Heart right ventricle (tissue), 16 donors: ENCODE measurements at regions of chr19 and their contacts with region 1.

Region 1: GRCh38 chr19:37466798-37467607 is at the start of gene ZNF569:
- DNase-seq: peak; percentile 85 to 93
- ATAC-seq: peak; percentile 84 to 90 (median 86)
- H3K4me3 ChIP-seq: peak within 1 kb of the TSS; percentile 71 to 85 (median 79)
- H3K27ac ChIP-seq: peak within 1 kb of the TSS; percentile 85 to 99 (median 94)
- H3K4me1 ChIP-seq: peaks cover 2 to 34% (median 27%) of the 10 kb centered on the region in 9 donors
- H3K27me3 ChIP-seq: no peaks in the 10 kb centered on the region
- CTCF ChIP-seq: no peak
- total RNA-seq, gene ZNF569: 4.5 to 8.0 (median 6.2) TPM

Region 2: DNA sequence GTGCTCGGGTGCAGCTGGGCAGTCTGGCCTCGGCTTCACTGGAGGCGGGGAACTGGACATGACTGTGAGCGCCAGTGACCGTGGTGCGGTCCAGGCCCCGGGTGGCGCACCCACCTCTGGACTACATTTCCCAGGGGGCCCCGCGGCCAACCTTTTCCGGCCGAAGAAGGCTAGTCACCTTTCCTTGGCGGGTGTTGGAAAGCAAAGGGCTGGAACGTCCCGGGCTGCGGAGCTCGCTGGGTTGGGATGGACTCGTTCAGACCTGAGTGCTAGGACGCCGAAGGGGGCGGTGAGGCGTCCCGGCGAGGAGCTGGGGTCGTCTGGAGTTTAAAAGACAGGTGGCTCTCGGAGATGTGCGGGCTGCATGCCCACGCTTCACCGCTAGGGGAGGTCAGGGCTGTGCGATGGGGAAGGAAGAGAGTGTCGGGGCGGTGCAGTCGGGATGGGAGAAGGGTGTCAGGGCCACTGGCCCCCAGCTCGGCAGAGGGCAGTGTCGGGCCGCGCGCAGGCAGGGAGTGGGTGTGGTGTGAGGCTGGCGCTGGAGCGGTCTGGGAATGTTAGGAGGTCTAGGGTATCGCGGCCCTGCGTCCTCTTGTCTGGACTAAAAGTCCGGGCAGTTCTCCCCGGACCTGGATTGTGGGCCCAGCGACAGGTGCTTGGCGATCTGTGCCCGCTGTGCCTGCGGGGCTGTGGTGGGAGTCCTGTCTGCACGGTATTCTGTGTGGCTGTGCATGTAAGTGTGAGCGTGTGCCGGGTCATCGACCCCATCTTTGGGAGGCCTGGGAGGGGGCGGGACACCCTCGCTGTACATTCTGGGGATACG is 493.8 kb before region 1 on chr19:
- intact Hi-C with region 1: loop called in 1 of 10 experiments (anchors 5 kb)
- DNase-seq: peak; percentile 89
- ATAC-seq: peak; percentile 97 to 100 (median 100)
- H3K4me3 ChIP-seq: peak overlapping the region; percentile 48 to 92 (median 74)
- H3K27ac ChIP-seq: peak overlapping the region; percentile 59 to 91 (median 74)
- H3K4me1 ChIP-seq: peaks cover 5 to 19% (median 14%) of the 10 kb centered on the region in 9 donors
- H3K27me3 ChIP-seq: no peaks in the 10 kb centered on the region
- CTCF ChIP-seq: peak; percentile 74 to 98 (median 94)

Region 3: GRCh38 chr19:37309834-37310575 is 157.0 kb before region 1 on chr19:
- intact Hi-C with region 1: loop called in 1 of 10 experiments (anchors 10 kb)
- DNase-seq: no peak
- ATAC-seq: no peak
- H3K4me3 ChIP-seq: no peak overlapping the region
- H3K27ac ChIP-seq: no peak overlapping the region
- H3K4me1 ChIP-seq: peaks cover 0 to 11% (median 5%) of the 10 kb centered on the region in 9 donors
- H3K27me3 ChIP-seq: no peaks in the 10 kb centered on the region
- CTCF ChIP-seq: peak in 1 of 9 donors; percentile 11

Region 4: DNA sequence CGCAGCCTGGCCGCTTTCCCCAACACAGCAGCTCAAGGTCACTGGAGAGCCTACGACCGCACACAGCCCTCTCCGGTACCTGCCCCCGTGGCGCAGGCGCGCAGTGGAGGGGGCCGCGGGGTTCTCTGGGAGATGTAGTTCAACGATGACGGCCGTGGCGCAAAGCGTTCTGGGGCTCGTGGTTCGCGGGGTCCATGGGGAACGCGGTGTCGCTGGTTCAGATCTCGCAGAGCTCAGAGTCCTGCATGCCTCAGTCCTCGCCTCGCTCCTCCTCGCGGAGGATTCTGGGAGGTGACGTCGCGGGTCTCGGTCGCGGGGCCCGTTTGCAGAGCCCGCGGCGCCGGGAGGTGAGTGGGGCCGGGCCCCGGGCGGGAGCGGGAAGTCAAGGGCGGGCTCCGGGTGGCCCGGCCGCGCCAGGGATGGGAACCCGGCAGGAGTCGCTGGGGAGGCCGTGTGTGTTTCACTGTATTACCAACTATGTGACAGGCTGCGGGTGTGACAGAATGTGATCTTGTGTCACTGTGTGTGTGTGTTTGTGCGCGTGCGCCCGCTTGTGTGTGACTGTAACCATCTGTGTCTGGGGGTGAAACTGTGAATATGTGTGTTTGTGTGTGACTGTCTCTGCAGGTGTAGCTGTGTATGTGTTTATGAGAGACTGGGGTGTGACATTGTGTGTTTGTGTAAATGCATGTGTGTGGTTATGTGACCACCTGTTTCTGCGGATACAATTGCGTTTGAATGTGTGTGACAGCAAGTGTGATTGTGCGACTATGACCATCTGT is 95.9 kb before region 1 on chr19 and contains the start of gene ZNF527:
- intact Hi-C with region 1: loop called in 4 of 10 experiments (anchors 1 to 5 kb)
- DNase-seq: peak; percentile 98
- ATAC-seq: peak; percentile 98 to 100 (median 99)
- H3K4me3 ChIP-seq: peak within 1 kb of the TSS; percentile 45 to 83 (median 66)
- H3K27ac ChIP-seq: peak within 1 kb of the TSS; percentile 63 to 92 (median 83)
- H3K4me1 ChIP-seq: peaks cover 0 to 20% (median 11%) of the 10 kb centered on the region in 9 donors
- H3K27me3 ChIP-seq: no peaks in the 10 kb centered on the region
- CTCF ChIP-seq: peak in 3 of 9 donors; percentile 10 to 33 (median 29)
- total RNA-seq, gene ZNF527: 3.6 to 7.9 (median 6.1) TPM

Region 5: DNA sequence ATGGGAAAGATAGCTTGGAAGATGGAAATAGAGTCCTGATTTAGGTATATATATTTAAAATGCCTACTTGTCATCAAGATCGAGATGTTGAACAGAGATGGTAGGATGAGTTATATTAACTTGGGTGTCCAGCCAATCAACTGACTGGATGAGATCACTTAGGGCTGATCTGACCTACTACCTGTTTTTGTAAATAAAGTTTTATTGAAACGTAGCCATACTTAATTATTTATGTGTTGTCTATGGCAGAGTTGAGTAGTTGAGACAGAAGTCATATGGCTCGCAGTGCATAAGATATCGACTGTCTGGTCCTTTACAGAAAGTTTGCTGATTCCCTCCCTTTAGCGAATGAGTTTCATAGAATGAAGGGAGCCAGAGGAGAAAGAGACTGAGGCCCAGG is 135.2 kb after region 1 on chr19:
- intact Hi-C with region 1: no loop called
- DNase-seq: no peak
- ATAC-seq: no peak
- H3K4me3 ChIP-seq: no peak overlapping the region
- H3K27ac ChIP-seq: no peak overlapping the region
- H3K4me1 ChIP-seq: no peaks in the 10 kb centered on the region
- H3K27me3 ChIP-seq: no peaks in the 10 kb centered on the region
- CTCF ChIP-seq: no peak

Region 6: DNA sequence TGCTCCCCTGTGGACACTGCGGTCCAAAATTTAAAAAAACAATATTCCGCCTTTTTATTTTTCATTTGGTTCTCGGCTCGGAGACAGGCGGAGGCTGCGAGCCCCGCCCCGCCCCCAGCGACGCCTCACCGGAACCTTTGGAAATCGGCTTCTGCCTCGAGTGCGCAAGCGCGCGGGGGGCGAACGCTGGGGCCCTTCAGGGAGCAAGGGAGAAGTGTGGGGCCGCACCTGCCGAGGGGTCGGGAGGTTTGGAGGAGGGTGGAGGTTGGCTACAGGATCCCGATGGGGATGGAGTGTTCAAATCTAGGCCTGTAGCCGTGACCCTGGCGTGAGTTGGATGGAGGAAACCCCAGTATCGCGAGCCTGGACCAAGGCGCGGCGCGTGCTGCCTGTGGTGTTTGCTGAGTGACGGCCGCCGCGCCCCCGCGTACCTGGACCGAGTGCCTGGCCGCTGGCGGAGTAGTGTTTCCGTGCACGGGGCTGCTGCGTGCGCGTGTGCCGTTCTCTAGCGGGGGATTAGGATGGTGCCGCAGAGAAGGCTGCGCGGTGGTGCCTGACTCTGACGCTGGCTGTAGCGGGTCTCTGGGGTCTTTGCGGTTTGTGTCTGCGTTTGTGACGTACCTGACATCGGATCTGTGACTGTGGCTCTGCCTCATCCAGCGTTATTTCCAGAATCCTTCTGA is 188.8 kb after region 1 on chr19:
- intact Hi-C with region 1: loop called in 1 of 10 experiments (anchors 2 kb)
- DNase-seq: peak; percentile 86 to 88
- ATAC-seq: peak; percentile 77 to 93 (median 88)
- H3K4me3 ChIP-seq: peak overlapping the region; percentile 63 to 90 (median 80)
- H3K27ac ChIP-seq: peak overlapping the region; percentile 39 to 93 (median 90)
- H3K4me1 ChIP-seq: peaks cover 0 to 31% (median 24%) of the 10 kb centered on the region in 9 donors
- H3K27me3 ChIP-seq: no peaks in the 10 kb centered on the region
- CTCF ChIP-seq: peak in 1 of 9 donors; percentile 9

Region 7: GRCh38 chr19:38155453-38155852 is 688.5 kb after region 1 on chr19:
- intact Hi-C with region 1: no loop called
- DNase-seq: no peak
- ATAC-seq: no peak
- H3K4me3 ChIP-seq: no peak overlapping the region
- H3K27ac ChIP-seq: no peak overlapping the region
- H3K4me1 ChIP-seq: peaks cover 0 to 14% (median 6%) of the 10 kb centered on the region in 9 donors
- H3K27me3 ChIP-seq: no peaks in the 10 kb centered on the region
- CTCF ChIP-seq: no peak